Activated B cell treated with CpG ODN at 0.5 μM for 24 hours (primary cell): ENCODE measurements at regions of chr2 and their contacts with region 1.

Region 1: DNA sequence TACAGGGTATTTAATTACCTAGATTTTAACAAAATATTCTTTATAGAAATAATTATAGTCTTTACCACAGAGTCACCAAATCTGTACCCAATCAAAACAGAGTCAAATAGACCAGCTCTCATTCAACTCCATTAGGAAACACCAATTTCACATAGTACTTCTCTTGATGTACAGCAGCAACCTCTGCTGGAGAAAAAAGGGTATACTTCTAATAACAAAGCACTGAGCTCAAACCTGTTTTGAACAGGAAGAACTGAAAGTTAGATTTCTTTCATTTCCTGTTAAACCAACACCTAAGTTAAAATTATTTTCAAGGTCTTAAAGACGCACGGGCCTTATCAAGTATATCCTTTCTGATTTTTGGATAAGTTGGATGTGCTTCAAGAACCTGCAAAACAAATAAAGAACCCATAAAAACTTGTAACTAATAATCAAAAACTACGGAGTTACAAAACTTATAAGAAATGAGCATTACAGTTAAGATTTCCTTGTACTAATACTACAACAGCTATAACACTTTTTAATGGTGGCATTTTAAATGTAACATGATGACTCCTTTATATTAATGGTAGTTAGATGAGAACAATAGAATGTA is 79.0 kb downstream of the TTC21B start:
- DNase-seq: no peak
- ATAC-seq: peak; percentile 95
- H3K4me3 Mint-ChIP-seq: no peak overlapping the region
- H3K27ac Mint-ChIP-seq: no peak overlapping the region
- H3K4me1 Mint-ChIP-seq: peaks cover 7% of the 10 kb centered on the region
- H3K27me3 Mint-ChIP-seq: no peaks in the 10 kb centered on the region
- CTCF ChIP-seq: no peak

Region 2: GRCh38 chr2:165015052-165015642 is 859.4 kb before region 1 on chr2:
- CTCF ChIA-PET with region 1: interaction called, 9 read pairs
- POLR2A ChIA-PET with region 1: no interaction called
- intact Hi-C with region 1: loop called (anchors 2 kb)
- DNase-seq: no peak
- ATAC-seq: peak; percentile 35
- H3K4me3 Mint-ChIP-seq: no peak overlapping the region
- H3K27ac Mint-ChIP-seq: no peak overlapping the region
- H3K4me1 Mint-ChIP-seq: no peaks in the 10 kb centered on the region
- H3K27me3 Mint-ChIP-seq: no peaks in the 10 kb centered on the region
- CTCF ChIP-seq: peak; percentile 82

Region 3: DNA sequence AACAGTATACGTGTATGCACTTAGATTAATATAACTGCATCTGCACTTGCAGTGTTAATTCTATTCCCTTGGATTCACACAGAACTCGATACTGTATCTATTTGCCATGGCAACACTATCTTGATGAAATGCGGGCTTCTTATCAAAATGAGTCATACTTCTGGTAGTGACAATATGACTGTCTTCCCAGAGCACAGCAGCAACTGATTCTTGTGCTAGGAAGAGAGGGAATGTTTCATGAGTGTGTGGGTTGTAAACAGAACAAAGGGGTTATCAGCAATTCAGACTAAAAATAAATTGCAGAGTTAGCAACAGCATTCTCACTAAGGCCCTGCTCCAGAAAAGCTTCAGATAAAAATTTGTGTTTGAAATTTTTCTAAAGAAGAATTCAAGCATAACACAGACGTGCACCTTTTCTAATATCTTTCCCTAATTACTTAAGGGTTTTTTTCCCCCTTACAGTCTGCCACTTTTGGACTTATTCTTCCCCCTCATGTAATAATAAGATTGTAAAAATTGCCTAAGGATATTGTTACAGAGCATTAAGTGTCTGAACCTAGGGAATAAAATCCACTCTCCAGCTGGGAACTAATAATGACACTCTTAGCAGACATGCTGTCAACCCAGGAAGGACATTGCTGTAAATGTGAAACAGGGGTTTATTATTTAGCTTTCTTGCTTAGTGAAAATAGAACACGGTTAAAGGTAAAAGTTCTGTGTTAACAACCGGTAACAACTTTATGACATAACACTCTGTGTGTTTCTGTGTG is 819.3 kb before region 1 on chr2:
- CTCF ChIA-PET with region 1: no interaction called
- POLR2A ChIA-PET with region 1: no interaction called
- intact Hi-C with region 1: no loop called
- DNase-seq: no peak
- ATAC-seq: no peak
- H3K4me3 Mint-ChIP-seq: no peak overlapping the region
- H3K27ac Mint-ChIP-seq: no peak overlapping the region
- H3K4me1 Mint-ChIP-seq: no peaks in the 10 kb centered on the region
- H3K27me3 Mint-ChIP-seq: no peaks in the 10 kb centered on the region
- CTCF ChIP-seq: no peak

Region 4: GRCh38 chr2:165293440-165294353 is 580.8 kb before region 1 on chr2:
- CTCF ChIA-PET with region 1: no interaction called
- POLR2A ChIA-PET with region 1: no interaction called
- intact Hi-C with region 1: loop called (anchors 10 kb)
- DNase-seq: no peak
- ATAC-seq: peak; percentile 100
- H3K4me3 Mint-ChIP-seq: no peak overlapping the region
- H3K27ac Mint-ChIP-seq: no peak overlapping the region
- H3K4me1 Mint-ChIP-seq: peaks cover 4% of the 10 kb centered on the region
- H3K27me3 Mint-ChIP-seq: peaks cover 7% of the 10 kb centered on the region
- CTCF ChIP-seq: no peak

Region 5: DNA sequence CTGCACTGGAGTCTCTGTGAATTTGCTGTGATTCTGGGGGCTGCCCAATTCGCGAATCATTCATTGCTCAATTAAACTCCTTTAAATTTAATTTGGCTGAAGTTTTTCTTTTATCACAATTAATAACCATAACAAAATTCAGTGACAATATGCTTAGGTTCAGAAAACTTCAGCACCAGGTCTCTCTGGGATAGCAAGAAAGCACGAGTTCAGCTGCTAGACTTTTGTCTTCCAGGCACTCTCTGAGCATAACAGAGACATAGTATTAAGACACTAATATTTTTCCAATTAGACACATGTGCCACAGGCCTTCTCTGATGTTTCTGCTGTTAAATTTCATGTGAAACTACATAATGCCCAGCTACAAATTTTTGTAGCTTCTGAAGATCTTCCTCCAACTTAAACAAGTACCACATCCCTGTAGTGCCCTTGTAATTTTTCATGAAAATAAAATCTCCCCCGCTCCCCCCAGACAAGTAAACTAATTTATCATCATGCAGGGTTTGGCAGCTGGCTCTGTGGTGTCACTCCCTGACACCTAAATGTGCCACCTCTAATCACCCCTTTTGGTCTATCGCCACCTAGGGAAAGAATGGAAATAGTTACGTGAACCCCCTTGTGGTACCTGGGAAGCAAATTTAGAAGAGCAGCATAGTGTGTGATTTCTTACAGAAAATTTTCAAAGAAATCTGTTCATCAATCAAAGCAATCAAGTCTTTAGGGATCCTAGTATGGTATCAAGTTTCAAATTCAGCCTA is 310.9 kb before region 1 on chr2:
- CTCF ChIA-PET with region 1: interaction called, 16 read pairs
- POLR2A ChIA-PET with region 1: no interaction called
- intact Hi-C with region 1: loop called (anchors 2 kb)
- DNase-seq: no peak
- ATAC-seq: no peak
- H3K4me3 Mint-ChIP-seq: no peak overlapping the region
- H3K27ac Mint-ChIP-seq: no peak overlapping the region
- H3K4me1 Mint-ChIP-seq: no peaks in the 10 kb centered on the region
- H3K27me3 Mint-ChIP-seq: peaks cover 4% of the 10 kb centered on the region
- CTCF ChIP-seq: no peak

Region 6: GRCh38 chr2:165743442-165743841 is 131.1 kb before region 1 on chr2:
- CTCF ChIA-PET with region 1: interaction called, 7 read pairs
- POLR2A ChIA-PET with region 1: no interaction called
- intact Hi-C with region 1: loop called (anchors 5 kb)
- DNase-seq: no peak
- ATAC-seq: peak; percentile 93
- H3K4me3 Mint-ChIP-seq: no peak overlapping the region
- H3K27ac Mint-ChIP-seq: peak overlapping the region; percentile 9
- H3K4me1 Mint-ChIP-seq: peaks cover 15% of the 10 kb centered on the region
- H3K27me3 Mint-ChIP-seq: no peaks in the 10 kb centered on the region
- CTCF ChIP-seq: no peak

Region 7: GRCh38 chr2:165794536-165794928 is 80.0 kb before region 1 on chr2:
- CTCF ChIA-PET with region 1: interaction called, 28 read pairs
- POLR2A ChIA-PET with region 1: interaction called, 6 read pairs
- intact Hi-C with region 1: loop called (anchors 1 kb)
- DNase-seq: no peak
- ATAC-seq: peak; percentile 87
- H3K4me3 Mint-ChIP-seq: peak overlapping the region; percentile 97
- H3K27ac Mint-ChIP-seq: peak overlapping the region; percentile 96
- H3K4me1 Mint-ChIP-seq: peaks cover 36% of the 10 kb centered on the region
- H3K27me3 Mint-ChIP-seq: no peaks in the 10 kb centered on the region
- CTCF ChIP-seq: no peak

Region 8: GRCh38 chr2:166000401-166000800 is 125.9 kb after region 1 on chr2:
- CTCF ChIA-PET with region 1: no interaction called
- POLR2A ChIA-PET with region 1: no interaction called
- intact Hi-C with region 1: no loop called
- DNase-seq: no peak
- ATAC-seq: no peak
- H3K4me3 Mint-ChIP-seq: no peak overlapping the region
- H3K27ac Mint-ChIP-seq: no peak overlapping the region
- H3K4me1 Mint-ChIP-seq: no peaks in the 10 kb centered on the region
- H3K27me3 Mint-ChIP-seq: peaks cover 7% of the 10 kb centered on the region
- CTCF ChIP-seq: no peak

Region 9: DNA sequence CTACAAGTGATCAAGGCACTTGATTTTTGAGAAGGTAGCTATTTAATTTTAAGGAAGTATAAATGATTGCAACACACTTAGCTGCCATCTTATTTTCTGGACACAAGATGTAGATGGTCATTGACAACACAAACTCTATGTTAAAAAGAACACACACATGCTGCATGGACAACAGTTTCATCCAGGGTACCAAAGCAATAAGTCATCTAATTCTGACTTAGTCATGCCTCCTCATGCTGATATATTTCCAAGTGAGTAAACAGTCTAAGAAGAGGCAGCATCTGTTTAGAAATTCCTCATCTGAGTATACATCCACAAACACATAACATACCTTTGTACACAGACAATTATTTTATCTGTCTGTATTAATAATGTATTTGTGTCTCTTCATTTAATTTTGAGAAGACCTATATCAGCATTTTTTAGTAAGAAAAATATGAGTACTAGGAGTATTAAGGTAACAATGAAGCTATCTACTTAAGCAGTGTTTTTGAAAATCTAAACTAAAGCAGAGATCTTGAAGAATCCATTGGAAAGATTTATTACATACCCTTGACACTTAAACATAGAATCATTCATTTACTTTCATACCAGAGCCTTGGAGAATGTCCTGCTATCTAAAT is 168.3 kb after region 1 on chr2:
- CTCF ChIA-PET with region 1: no interaction called
- POLR2A ChIA-PET with region 1: no interaction called
- intact Hi-C with region 1: no loop called
- DNase-seq: no peak
- ATAC-seq: no peak
- H3K4me3 Mint-ChIP-seq: no peak overlapping the region
- H3K27ac Mint-ChIP-seq: no peak overlapping the region
- H3K4me1 Mint-ChIP-seq: no peaks in the 10 kb centered on the region
- H3K27me3 Mint-ChIP-seq: no peaks in the 10 kb centered on the region
- CTCF ChIP-seq: no peak